IMR-90 (cell line): ENCODE measurements at regions of chr3 and their contacts with region 1.

Region 1: DNA sequence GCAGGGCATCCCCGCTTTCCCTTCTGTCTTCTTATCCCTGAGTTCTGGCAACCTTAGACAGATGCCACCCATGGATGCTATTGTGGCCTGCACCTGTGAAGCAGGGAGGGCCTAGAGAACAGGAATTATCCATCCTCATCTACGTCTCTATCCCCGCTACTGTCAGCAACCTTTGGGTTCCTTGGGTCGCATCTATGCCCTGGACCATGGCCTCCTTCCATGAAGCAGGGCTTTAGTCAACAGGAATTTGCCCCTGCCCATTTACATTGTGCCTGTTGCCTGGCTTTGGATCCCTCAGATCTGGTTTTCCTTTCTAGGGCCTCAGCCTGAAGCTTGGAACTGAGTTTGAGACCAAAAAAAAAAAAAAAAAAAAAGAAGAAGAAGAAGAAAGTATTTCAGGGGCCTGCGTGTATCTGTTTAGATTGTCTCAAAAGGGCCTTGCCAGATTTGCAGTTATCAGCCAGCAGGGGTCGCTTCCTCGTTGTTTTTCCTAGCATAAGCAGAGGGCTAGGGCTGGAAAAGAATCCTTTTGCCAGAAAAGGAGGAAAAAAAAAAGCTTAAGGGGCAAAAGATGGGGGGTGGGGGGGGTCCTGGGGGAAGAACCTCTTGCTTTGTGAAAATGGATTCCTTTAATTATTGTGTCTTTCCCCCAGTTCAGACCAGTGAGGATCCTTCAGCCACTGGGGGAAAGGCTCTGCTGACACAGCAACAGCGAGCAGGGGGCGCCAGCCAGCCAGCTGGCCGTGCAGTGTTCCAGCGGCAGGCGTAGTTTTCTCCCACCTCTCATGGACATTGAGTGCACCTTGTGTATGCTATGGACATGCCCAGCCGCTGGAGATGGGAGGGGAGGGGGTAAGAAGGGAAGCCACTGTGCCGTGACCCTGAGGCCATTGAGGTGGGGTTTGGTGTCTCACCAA is 65.7 kb upstream of the ALDH1L1 start:
- DNase-seq: peak; percentile 65
- ATAC-seq: peak; percentile 87
- H3K4me3 ChIP-seq: no peak overlapping the region
- H3K27ac ChIP-seq: no peak overlapping the region
- H3K4me1 ChIP-seq: no peaks in the 10 kb centered on the region
- H3K27me3 ChIP-seq: peaks cover 28% of the 10 kb centered on the region
- CTCF ChIP-seq: peak; percentile 65
- POLR2A ChIP-seq: no peak
- RAD21 ChIP-seq: peak; percentile 63

Region 2: DNA sequence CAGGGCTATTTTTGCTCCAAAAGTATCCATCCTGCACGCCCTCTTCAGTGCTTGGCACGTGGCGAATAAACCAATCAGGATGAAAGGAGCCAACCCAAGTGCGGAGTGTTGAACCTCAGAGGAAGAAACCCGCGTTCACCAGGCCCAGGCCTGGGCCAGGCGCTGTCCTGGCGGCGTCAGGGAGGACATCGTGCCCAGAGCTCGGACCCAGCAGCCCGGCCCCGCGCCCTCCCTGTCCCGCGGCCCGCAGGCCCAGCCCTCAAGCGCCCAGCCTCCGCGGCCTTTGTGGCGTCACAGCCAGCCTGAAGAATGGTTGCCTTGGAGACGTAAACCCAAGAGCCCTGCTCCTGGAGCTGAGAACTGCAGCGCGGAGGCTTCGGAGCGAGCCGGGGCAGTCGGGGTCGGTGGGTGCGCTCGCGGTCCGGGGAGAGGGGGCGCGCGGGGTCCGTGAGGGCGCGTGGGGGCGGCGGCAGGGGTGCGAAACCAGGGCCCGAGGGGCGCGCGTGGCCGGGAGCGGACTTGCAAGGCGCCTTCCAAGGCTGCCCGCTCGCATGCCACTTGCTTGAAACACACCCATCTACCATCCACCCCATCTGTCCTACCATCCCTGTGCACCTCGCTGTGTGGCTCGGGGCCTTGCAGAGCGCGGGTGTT is 148.6 kb after region 1 on chr3 and contains the start of gene CFAP100:
- CTCF ChIA-PET with region 1: interaction called, 4 read pairs
- POLR2A ChIA-PET with region 1: no interaction called
- dilution Hi-C with region 1: no loop called
- in situ Hi-C with region 1: loop called (anchors 10 kb)
- intact Hi-C with region 1: loop called (anchors 1 kb)
- DNase-seq: peak; percentile 15
- ATAC-seq: peak; percentile 81
- H3K4me3 ChIP-seq: no peak within 1 kb of the TSS
- H3K27ac ChIP-seq: no peak within 1 kb of the TSS
- H3K4me1 ChIP-seq: no peaks in the 10 kb centered on the region
- H3K27me3 ChIP-seq: peaks cover 49% of the 10 kb centered on the region
- CTCF ChIP-seq: no peak
- POLR2A ChIP-seq: no peak
- RAD21 ChIP-seq: no peak
- total RNA-seq, gene CFAP100: not detected in 2 replicates

Region 3: DNA sequence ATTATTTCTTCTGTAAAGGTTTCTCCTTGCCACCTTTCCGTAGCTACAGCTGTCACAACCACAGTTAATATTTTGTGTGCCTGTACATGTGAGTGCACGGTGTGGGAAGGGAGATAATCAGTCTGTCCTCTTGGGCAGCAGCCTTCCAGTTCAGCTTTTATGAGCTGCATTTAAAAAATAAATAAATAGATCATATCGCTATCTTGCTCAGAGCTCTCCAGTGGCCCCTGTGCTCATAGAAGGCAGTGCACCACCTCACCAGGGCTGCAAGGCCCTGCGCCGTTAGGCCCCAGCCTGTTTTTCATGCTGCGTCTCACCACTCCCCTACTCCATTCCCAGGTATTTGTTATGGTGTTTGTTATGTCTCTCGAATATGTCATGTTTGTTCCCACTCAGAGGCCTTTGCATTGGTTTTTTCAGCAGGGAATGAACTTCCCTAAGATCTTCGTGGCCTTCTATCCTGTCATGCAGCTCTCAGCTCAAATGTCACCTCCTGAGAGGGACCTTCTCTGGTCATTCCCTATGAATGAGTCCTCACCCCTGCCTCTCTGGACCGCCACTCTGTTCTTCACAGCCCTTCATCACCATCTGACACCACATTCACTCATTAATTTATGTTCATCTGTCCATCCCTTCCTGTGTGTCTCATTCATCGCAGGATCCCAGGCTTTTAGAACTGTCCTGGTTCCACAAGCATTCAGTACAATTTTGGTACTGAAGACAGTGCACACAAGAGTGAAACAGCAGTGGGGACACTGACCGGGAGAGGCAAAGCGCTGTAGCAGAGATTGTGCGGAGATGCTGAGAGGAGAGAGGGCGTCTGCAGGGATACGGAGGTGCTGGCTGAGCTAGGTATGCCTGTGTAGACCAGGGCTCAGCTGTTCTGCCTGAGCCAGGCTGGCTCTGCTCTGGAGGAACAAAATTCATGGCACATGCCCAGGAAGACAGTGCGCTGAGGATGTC is 590.1 kb after region 1 on chr3:
- CTCF ChIA-PET with region 1: no interaction called
- POLR2A ChIA-PET with region 1: no interaction called
- dilution Hi-C with region 1: no loop called
- in situ Hi-C with region 1: no loop called
- intact Hi-C with region 1: no loop called
- DNase-seq: peak; percentile 51
- ATAC-seq: peak; percentile 91
- H3K4me3 ChIP-seq: no peak overlapping the region
- H3K27ac ChIP-seq: no peak overlapping the region
- H3K4me1 ChIP-seq: peaks cover 8% of the 10 kb centered on the region
- H3K27me3 ChIP-seq: no peaks in the 10 kb centered on the region
- CTCF ChIP-seq: peak; percentile 45
- POLR2A ChIP-seq: no peak
- RAD21 ChIP-seq: peak; percentile 50